A549 (cell line): ENCODE measurements at regions of chr1 and their contacts with region 1.

Region 1: DNA sequence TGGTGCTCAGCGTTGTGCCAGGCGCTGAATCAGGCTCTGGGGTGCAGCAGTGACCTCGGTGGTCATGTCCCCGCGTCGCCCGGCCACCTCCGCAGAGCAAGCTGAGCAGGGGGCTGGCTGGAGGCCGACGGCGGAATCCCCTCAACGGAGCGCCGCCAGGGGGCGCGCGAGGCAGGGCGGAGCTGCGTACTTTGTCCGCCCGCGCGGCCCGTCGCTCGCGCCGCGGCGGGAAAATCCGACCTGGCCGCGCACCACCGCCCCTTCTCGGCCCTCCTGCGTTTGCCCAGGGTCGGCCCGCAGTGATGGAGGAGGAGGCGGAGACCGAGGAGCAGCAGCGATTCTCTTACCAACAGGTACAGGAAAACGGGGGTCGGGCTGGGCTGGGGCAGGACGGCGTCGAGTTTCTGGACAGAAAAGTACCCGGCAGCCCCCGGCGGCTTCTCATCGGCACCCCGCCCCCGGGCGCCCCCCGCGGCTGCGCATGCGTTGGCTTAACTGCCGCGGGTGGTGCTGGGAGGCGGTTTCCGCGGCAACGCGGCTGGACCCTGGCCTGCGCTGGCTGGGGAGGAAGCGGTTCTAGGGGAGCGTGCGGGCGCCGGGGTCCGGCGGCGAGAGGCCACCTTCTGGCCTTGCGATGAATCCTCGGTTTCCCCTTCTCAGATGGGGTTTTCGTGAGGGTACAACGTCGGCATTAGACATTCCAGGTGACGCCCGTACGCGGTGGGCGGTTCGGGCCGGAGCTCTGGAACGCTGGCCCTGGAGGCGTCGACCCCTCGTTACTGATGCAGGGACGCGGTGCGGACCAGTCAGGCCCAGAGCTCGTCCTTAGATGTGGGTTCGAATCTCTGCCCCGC is at the start of gene CENPS:
- DNase-seq: peak; percentile 80 to 82
- ATAC-seq: peak; percentile 83 to 86
- H3K4me3 ChIP-seq: peak within 1 kb of the TSS; percentile 87
- H3K27ac ChIP-seq: peak within 1 kb of the TSS; percentile 87 to 97
- H3K4me1 ChIP-seq: peaks cover 18% of the 10 kb centered on the region
- CTCF ChIP-seq: peak; percentile 79
- EP300 ChIP-seq: no peak
- POLR2A ChIP-seq: peak; percentile 47
- RAD21 ChIP-seq: peak; percentile 42 to 62; a peak in 4 of 5 replicates
- polyA plus RNA-seq, gene CENPS: 19.7 and 25.7 TPM in 2 replicates

Region 2: DNA sequence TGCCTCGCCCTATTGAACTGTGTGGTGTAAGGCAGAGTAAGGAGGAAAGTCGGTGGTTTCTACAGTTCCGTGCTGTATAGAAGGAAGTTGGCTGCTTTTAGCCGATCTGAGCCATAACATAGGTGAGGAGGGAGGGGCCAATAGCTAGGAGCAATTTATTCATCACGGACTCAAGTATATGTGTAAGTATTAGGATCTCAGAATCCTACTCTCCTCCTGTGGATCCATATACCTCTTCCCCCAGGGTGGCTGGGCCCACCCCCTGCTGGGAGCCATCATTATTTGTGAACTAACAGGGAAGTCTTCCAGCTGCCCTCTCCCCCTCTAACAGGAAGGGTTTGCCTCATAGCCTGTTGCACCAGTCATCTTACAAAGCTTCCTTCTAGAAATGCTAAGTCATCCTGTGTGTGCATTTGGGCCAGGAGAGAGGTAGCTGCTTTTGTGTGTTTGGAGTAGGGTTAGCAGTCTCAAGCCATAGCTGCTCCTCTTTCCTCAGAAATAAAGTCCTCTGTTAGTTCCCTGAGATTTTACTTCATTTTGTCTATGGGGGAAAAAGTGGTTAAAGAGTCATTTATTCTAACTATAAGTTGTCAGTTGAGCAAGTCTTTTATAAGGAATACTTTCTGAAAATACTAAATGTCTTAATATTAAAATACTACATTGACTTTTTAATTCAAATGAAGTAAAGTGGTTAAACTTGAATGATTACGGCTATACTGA is 15.1 kb before region 1 on chr1:
- CTCF ChIA-PET with region 1: interaction called, 10 read pairs
- POLR2A ChIA-PET with region 1: no interaction called
- DNase-seq: peak; percentile 51 to 96
- ATAC-seq: peak; percentile 80 to 81
- H3K4me3 ChIP-seq: peak overlapping the region; percentile 10; the same call in 1 of the 3 replicates
- H3K27ac ChIP-seq: peak overlapping the region; percentile 95 to 99
- H3K4me1 ChIP-seq: peaks cover 98% of the 10 kb centered on the region
- CTCF ChIP-seq: no peak
- EP300 ChIP-seq: peak; percentile 68 to 87; a peak in 3 of 5 replicates
- POLR2A ChIP-seq: no peak
- RAD21 ChIP-seq: no peak; a peak in 1 of 5 replicates

Region 3: DNA sequence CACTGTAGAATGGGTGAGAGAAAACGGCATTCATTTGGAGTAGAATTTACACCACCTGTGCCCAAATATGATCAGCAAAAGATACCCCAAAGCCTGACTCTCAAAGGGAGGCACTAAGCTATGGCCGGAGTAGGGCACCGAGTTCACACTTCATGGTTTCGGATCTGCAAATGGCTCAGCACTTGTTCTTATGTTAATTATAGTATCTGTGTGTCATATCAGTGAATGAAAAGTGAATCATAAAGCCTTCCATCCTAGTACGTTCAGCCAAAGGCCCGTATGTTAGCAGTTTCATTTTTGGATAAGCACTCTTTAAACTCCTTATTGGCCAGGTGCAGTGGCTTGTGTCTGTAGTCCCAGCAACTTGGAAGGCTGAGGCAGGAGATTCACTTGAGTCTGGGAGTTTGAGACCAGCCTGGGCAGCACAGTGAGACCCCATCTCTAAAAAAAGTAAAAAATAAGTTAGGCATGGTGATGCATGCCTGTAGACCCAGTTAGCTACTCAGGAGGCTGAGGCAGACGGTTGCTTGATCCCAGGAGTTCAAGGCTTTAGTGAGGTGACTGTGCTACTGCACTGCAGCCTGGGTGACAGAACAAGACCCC is 14.5 kb after region 1 on chr1:
- CTCF ChIA-PET with region 1: interaction called, 25 read pairs
- POLR2A ChIA-PET with region 1: interaction called, 5 read pairs
- DNase-seq: no peak
- ATAC-seq: no peak
- H3K4me3 ChIP-seq: no peak overlapping the region
- H3K27ac ChIP-seq: no peak overlapping the region
- H3K4me1 ChIP-seq: no peaks in the 10 kb centered on the region
- CTCF ChIP-seq: no peak
- EP300 ChIP-seq: no peak
- POLR2A ChIP-seq: no peak
- RAD21 ChIP-seq: no peak

Region 4: GRCh38 chr1:10510520-10511493 is 80.4 kb after region 1 on chr1:
- CTCF ChIA-PET with region 1: no interaction called
- POLR2A ChIA-PET with region 1: no interaction called
- DNase-seq: peak; percentile 32 to 50
- ATAC-seq: peak; percentile 73 to 81
- H3K4me3 ChIP-seq: no peak overlapping the region
- H3K27ac ChIP-seq: peak overlapping the region in 1 of 2 experiments; percentile 58; a peak in 3 of 6 replicates
- H3K4me1 ChIP-seq: peaks cover 40% of the 10 kb centered on the region
- CTCF ChIP-seq: no peak
- EP300 ChIP-seq: no peak
- POLR2A ChIP-seq: no peak
- RAD21 ChIP-seq: no peak